B cell (primary cell): ENCODE measurements at regions of chr9 and their contacts with region 1.

Region 1: GRCh38 chr9:134698587-134699342 is 57.2 kb downstream of the COL5A1 start:
- DNase-seq: peak; percentile 64
- ATAC-seq: peak; percentile 45
- H3K4me3 ChIP-seq: no peak overlapping the region
- H3K4me3 Mint-ChIP-seq: no peak overlapping the region
- H3K27ac ChIP-seq: no peak overlapping the region
- H3K27ac Mint-ChIP-seq: no peak overlapping the region
- H3K4me1 ChIP-seq: no peaks in the 10 kb centered on the region
- H3K4me1 Mint-ChIP-seq: no peaks in the 10 kb centered on the region
- H3K27me3 ChIP-seq: no peaks in the 10 kb centered on the region
- H3K27me3 Mint-ChIP-seq: no peaks in the 10 kb centered on the region
- CTCF ChIP-seq: peak; percentile 77

Region 2: DNA sequence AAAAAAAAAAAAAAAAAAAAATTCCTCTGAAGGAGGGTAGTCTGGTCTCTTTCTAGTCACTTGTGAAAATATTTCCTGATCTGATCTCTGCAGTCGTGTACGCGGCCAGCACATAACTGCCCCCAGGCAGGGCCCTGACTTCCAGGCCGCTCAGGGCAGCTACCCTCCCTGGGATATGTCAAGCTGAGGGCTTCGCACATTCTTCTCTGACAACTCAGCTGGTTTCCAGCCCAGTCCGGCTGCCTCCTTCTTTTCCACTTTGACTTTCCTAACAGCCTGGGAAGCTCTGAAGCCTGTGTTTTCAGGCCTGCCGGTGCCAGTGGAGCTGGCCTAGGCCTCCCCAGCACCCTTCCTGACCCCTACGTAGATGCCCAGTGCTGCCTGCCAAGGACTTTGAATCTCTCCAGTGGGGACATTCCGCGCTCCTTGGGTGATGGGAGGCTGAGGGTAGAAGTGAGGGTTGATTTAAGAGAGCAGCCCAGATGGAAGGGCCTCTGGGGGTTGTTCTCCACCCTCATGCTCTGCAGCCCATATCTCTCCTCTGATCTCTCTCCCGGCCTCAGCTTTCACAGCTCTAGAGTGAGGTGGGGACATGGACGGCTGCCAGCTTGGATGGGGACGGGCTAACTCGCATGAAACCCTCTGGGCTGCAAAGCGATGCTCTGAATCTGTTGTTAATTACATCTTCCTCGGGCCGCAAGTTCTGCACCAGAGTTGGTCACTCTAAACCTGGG is 36.5 kb before region 1 on chr9:
- CTCF ChIA-PET with region 1: no interaction called
- POLR2A ChIA-PET with region 1: no interaction called
- intact Hi-C with region 1: no loop called
- DNase-seq: no peak
- ATAC-seq: no peak
- H3K4me3 ChIP-seq: no peak overlapping the region
- H3K4me3 Mint-ChIP-seq: no peak overlapping the region
- H3K27ac ChIP-seq: no peak overlapping the region
- H3K27ac Mint-ChIP-seq: no peak overlapping the region
- H3K4me1 ChIP-seq: no peaks in the 10 kb centered on the region
- H3K4me1 Mint-ChIP-seq: no peaks in the 10 kb centered on the region
- H3K27me3 ChIP-seq: no peaks in the 10 kb centered on the region
- H3K27me3 Mint-ChIP-seq: no peaks in the 10 kb centered on the region
- CTCF ChIP-seq: no peak

Region 3: DNA sequence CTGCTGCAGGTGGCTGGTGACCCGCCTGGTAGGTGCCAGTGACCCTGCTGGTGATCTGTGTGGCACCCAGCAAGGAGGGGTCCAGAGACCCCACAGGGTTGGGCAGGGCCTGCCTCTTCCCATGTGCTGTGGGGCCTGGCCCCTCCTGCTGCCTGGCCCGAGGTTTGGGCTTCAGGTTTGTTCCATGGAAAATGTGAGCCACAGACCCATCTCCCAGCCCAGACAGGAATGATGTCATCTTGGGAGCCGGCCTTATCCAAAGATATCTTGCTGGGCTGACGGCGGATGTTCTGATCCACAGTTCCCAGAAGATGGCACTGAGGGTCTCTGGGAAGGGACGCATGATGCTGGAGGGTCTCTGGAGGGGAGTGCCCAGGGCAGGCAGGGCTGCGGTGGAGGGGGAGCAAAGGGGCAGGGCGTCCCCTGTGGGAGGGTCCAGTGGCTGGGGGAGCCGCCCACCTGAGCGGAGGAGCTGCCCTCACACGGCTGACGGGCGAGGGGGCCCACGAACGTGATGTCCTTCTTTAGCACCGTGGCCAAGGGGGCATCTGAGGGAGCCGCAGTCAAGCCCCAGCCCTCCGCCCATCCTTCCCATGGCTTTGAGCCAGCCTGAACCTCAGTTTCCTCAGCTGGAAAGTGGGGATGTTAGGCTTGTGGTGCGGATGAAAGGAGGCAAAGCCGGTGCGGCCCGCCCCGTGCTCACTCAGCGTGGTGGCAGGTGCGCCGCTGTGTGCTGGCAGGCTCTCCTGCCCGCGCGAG is 10.9 kb after region 1 on chr9:
- CTCF ChIA-PET with region 1: no interaction called
- POLR2A ChIA-PET with region 1: no interaction called
- intact Hi-C with region 1: no loop called
- DNase-seq: no peak
- ATAC-seq: no peak
- H3K4me3 ChIP-seq: no peak overlapping the region
- H3K4me3 Mint-ChIP-seq: no peak overlapping the region
- H3K27ac ChIP-seq: no peak overlapping the region
- H3K27ac Mint-ChIP-seq: no peak overlapping the region
- H3K4me1 ChIP-seq: no peaks in the 10 kb centered on the region
- H3K4me1 Mint-ChIP-seq: no peaks in the 10 kb centered on the region
- H3K27me3 ChIP-seq: no peaks in the 10 kb centered on the region
- H3K27me3 Mint-ChIP-seq: no peaks in the 10 kb centered on the region
- CTCF ChIP-seq: no peak

Region 4: GRCh38 chr9:134983074-134983473 is 284.3 kb after region 1 on chr9:
- CTCF ChIA-PET with region 1: interaction called, 4 read pairs
- POLR2A ChIA-PET with region 1: no interaction called
- intact Hi-C with region 1: loop called (anchors 5 kb)
- DNase-seq: peak; percentile 28
- ATAC-seq: no peak
- H3K4me3 ChIP-seq: no peak overlapping the region
- H3K4me3 Mint-ChIP-seq: no peak overlapping the region
- H3K27ac ChIP-seq: no peak overlapping the region
- H3K27ac Mint-ChIP-seq: no peak overlapping the region
- H3K4me1 ChIP-seq: no peaks in the 10 kb centered on the region
- H3K4me1 Mint-ChIP-seq: no peaks in the 10 kb centered on the region
- H3K27me3 ChIP-seq: no peaks in the 10 kb centered on the region
- H3K27me3 Mint-ChIP-seq: peaks cover 8% of the 10 kb centered on the region
- CTCF ChIP-seq: peak; percentile 33